CD4-positive, alpha-beta memory T cell (primary cell): ENCODE measurements at regions of chr1 and their contacts with region 1.

Region 1: GRCh38 chr1:3727042-3727824 is 25.0 kb upstream of the CCDC27 start:
- DNase-seq: no peak
- H3K4me3 ChIP-seq: no peak overlapping the region
- H3K4me3 Mint-ChIP-seq: no peak overlapping the region
- H3K27ac ChIP-seq: no peak overlapping the region
- H3K27ac Mint-ChIP-seq: no peak overlapping the region
- H3K4me1 ChIP-seq: no peaks in the 10 kb centered on the region
- H3K4me1 Mint-ChIP-seq: peaks cover 0 to 4% (median 0%) of the 10 kb centered on the region in 4 donors
- H3K27me3 ChIP-seq: no peaks in the 10 kb centered on the region
- H3K27me3 Mint-ChIP-seq: peaks cover 1 to 8% of the 10 kb centered on the region in 2 donors

Region 2: DNA sequence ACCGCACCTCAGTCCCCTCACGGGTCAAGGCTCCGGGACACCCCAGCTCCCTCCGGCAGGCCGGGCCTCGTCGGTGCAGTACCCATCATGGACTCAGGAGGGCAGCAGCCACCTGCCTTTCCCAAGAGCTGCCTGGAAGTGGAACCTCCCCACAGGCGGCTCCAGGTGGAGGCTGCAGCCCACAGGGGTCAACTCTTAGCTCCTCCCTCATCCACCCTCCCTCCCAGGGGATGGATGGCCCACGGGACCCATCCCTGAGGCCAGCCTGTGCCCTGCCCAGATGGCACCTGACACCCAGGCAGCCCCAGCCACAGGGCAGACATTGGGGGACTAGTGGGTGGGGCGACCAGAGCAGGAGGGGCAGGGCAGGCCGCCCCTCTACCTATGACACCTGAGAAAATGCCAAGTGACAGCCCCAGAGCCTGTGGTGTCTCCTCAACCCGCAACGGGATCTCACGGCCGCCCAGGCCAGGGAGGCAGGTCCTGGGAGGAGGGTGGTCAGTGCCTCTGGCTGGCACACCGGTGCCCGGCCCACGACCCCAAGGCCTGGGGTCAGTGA is 274.0 kb before region 1 on chr1:
- CTCF ChIA-PET with region 1: interaction called, 23 read pairs
- POLR2A ChIA-PET with region 1: no interaction called
- intact Hi-C with region 1: no loop called
- DNase-seq: peak; percentile 57 to 75 (median 64)
- H3K4me3 ChIP-seq: no peak overlapping the region
- H3K4me3 Mint-ChIP-seq: peak overlapping the region; percentile 46 to 82 (median 66)
- H3K27ac ChIP-seq: no peak overlapping the region
- H3K27ac Mint-ChIP-seq: peak overlapping the region in 1 of 7 donors; percentile 43
- H3K4me1 ChIP-seq: peaks cover 13% of the 10 kb centered on the region
- H3K4me1 Mint-ChIP-seq: peaks cover 0 to 7% (median 2%) of the 10 kb centered on the region in 4 donors
- H3K27me3 ChIP-seq: peaks cover 11% of the 10 kb centered on the region
- H3K27me3 Mint-ChIP-seq: peaks cover 7 to 8% of the 10 kb centered on the region in 2 donors

Region 3: DNA sequence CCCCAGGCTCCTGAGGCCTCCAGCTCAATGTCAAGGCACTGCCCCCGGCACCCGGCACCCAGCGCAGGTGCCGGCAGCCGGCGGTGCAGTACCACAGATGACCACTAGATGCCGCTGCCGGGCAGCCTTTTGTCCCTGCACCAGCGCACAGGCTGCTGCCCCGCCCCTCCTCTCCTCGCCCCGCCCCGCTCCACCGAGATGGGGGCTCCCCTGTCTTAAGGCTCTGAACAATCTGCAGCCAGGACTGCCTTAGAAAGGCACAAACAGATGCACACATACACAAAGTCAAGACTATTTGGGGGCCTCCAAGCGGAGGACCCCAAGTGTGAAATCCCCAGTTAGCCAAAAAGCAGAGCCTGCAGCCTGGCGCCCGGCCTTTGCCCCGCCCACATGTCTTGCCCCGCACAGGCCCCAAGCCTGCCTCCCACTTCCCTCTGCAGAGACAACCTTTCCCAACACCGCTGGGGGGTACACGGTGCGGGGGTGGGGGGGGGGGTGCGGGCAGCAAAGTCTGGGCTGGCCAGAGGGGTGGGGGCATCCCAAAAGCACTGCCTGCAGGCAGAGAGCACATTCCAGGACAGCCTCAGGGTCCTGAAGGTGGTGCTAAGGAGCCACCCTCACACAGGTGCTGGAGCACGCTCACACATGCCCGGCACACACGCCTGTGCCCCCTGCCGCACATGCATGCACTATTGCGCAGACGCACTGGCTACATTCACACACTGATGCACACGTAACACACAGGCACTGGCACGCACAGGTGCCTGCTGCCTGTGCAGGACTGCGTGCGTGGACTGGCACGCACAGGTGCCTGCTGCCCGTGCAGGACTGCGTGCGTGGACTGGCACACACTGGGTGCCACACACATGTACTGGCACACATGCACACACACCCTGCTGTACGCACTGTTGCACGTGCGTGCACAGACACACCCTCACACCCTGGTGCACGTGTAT is 235.7 kb before region 1 on chr1:
- CTCF ChIA-PET with region 1: interaction called, 8 read pairs
- POLR2A ChIA-PET with region 1: no interaction called
- intact Hi-C with region 1: loop called (anchors 2 kb)
- DNase-seq: peak; percentile 76 to 83 (median 78)
- H3K4me3 ChIP-seq: no peak overlapping the region
- H3K4me3 Mint-ChIP-seq: peak overlapping the region in 5 of 8 donors; percentile 9 to 70 (median 52)
- H3K27ac ChIP-seq: no peak overlapping the region
- H3K27ac Mint-ChIP-seq: peak overlapping the region in 4 of 7 donors; percentile 4 to 50 (median 30)
- H3K4me1 ChIP-seq: no peaks in the 10 kb centered on the region
- H3K4me1 Mint-ChIP-seq: peaks cover 3 to 8% (median 6%) of the 10 kb centered on the region in 4 donors
- H3K27me3 ChIP-seq: no peaks in the 10 kb centered on the region
- H3K27me3 Mint-ChIP-seq: no peaks in the 10 kb centered on the region

Region 4: GRCh38 chr1:3695326-3696217 is 31.7 kb before region 1 on chr1:
- CTCF ChIA-PET with region 1: interaction called, 7 read pairs
- POLR2A ChIA-PET with region 1: no interaction called
- intact Hi-C with region 1: loop called (anchors 1 kb)
- DNase-seq: peak in 3 of 5 donors; percentile 15 to 23 (median 15)
- H3K4me3 ChIP-seq: no peak overlapping the region
- H3K4me3 Mint-ChIP-seq: peak overlapping the region in 4 of 8 donors; percentile 32 to 70 (median 47)
- H3K27ac ChIP-seq: no peak overlapping the region
- H3K27ac Mint-ChIP-seq: peak overlapping the region in 2 of 7 donors; percentile 55 to 71
- H3K4me1 ChIP-seq: no peaks in the 10 kb centered on the region
- H3K4me1 Mint-ChIP-seq: peaks cover 0 to 5% (median 3%) of the 10 kb centered on the region in 4 donors
- H3K27me3 ChIP-seq: no peaks in the 10 kb centered on the region
- H3K27me3 Mint-ChIP-seq: peaks cover 8 to 9% of the 10 kb centered on the region in 2 donors